Spleen (tissue), 13 donors: ENCODE measurements at regions of chr15 and their contacts with region 1.

Region 1: GRCh38 chr15:51982013-51982769 is 10.6 kb upstream of the LEO1 start:
- DNase-seq: no peak
- H3K4me3 ChIP-seq: peak overlapping the region in 4 of 8 donors; percentile 9 to 43 (median 16)
- H3K27ac ChIP-seq: peak overlapping the region in 5 of 8 donors; percentile 60 to 77 (median 68)
- H3K4me1 ChIP-seq: peaks cover 12 to 22% (median 15%) of the 10 kb centered on the region in 6 donors
- H3K27me3 ChIP-seq: no peaks in the 10 kb centered on the region
- CTCF ChIP-seq: peak in 9 of 11 experiments; percentile 37 to 73 (median 59)
- POLR2A ChIP-seq: no peak

Region 2: GRCh38 chr15:52078876-52079700 is 96.9 kb after region 1 on chr15:
- intact Hi-C with region 1: loop called (anchors 10 kb)
- DNase-seq: peak; percentile 93
- H3K4me3 ChIP-seq: no peak overlapping the region
- H3K27ac ChIP-seq: no peak overlapping the region
- H3K4me1 ChIP-seq: peaks cover 7 to 26% (median 18%) of the 10 kb centered on the region in 6 donors
- H3K27me3 ChIP-seq: no peaks in the 10 kb centered on the region
- CTCF ChIP-seq: peak; percentile 20 to 87 (median 71)
- POLR2A ChIP-seq: no peak

Region 3: DNA sequence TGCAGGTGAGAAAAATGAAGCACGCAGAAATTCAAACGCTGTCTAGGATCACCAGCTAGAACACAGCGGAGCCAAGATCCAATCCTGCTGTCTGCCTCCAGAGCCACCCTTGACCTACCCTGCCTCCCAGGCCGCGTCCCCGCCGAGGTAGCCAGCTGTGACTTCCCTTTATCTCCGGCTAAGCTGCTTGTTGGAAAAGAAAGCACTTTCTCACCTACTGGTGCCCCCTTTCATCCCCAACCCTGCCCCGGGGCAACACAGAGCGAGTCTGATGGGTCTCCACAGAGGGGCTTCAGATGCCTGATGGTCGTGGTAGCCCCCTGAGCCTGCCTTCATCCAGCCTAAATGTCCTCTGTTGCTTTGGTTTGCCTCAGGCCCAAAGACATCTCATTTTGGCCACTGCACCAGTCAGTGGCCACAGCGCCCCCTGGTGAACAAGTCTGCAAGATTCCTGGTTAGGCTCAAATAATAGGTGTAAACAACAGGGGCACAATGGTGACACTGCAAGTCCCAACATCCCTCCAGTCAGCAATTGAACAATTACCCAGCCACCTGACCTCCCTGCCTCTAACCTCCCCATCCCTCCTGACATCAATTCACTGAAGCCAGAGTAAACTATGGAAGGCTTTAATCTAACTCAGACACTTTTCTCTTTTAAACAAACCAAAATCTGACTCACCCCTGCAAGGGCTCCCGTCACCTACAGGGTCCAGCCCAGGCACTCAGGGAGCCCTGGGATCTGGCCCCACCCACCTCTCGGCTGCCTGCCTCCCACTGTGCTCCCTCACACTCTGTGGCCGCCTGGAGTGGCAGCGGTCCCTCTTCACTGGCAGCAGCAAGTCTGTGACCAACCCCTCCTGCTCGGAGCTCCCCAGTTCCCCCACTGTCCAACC is 157.7 kb after region 1 on chr15:
- intact Hi-C with region 1: loop called (anchors 5 kb)
- DNase-seq: peak; percentile 88
- H3K4me3 ChIP-seq: no peak overlapping the region
- H3K27ac ChIP-seq: no peak overlapping the region
- H3K4me1 ChIP-seq: peaks cover 2 to 42% (median 25%) of the 10 kb centered on the region in 6 donors
- H3K27me3 ChIP-seq: no peaks in the 10 kb centered on the region
- CTCF ChIP-seq: peak; percentile 43 to 81 (median 68)
- POLR2A ChIP-seq: no peak

Region 4: GRCh38 chr15:52208306-52208946 is 226.2 kb after region 1 on chr15:
- intact Hi-C with region 1: loop called (anchors 10 kb)
- DNase-seq: peak; percentile 83
- H3K4me3 ChIP-seq: no peak overlapping the region
- H3K27ac ChIP-seq: no peak overlapping the region
- H3K4me1 ChIP-seq: no peaks in the 10 kb centered on the region
- H3K27me3 ChIP-seq: no peaks in the 10 kb centered on the region
- CTCF ChIP-seq: peak; percentile 43 to 82 (median 65)
- POLR2A ChIP-seq: no peak